Caki2 (cell line): ENCODE measurements at regions of chr4 and their contacts with region 1.

Region 1: DNA sequence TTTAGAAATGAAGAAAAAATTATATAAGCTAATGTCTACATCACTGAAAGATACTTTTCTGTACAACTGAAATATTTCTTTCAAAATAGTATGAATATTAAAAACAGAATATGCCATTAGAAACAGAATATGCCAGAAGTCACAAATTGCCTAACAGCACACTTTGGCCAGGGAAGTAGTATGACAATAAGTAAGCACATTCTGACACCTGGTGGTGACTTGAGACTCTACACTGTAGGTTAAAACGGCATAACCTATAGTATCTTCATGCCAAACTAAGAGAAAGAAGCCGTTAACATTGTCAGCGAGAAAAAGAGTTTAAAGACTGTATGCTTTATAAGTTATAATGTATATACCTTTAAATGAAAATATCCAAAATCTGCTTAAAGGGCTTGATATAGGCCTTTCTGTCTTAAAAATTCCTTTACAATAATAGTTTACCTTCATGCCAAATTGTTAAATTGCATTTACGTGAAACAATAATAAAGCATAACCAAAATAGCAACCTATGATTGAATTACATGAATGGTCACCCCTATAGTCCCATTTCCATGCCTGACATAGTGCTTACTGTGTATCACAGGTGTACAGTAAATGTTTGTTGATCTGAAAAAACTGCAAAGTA is 32.8 kb downstream of the FAM13A start:
- DNase-seq: peak; percentile 44

Region 2: GRCh38 chr4:88823058-88823919 is 200.9 kb before region 1 on chr4:
- in situ Hi-C with region 1: loop called (anchors 25 kb)
- DNase-seq: peak; percentile 96